ENCODE measurements at regions of chr19 and their contacts with region 1.

Region 1: DNA sequence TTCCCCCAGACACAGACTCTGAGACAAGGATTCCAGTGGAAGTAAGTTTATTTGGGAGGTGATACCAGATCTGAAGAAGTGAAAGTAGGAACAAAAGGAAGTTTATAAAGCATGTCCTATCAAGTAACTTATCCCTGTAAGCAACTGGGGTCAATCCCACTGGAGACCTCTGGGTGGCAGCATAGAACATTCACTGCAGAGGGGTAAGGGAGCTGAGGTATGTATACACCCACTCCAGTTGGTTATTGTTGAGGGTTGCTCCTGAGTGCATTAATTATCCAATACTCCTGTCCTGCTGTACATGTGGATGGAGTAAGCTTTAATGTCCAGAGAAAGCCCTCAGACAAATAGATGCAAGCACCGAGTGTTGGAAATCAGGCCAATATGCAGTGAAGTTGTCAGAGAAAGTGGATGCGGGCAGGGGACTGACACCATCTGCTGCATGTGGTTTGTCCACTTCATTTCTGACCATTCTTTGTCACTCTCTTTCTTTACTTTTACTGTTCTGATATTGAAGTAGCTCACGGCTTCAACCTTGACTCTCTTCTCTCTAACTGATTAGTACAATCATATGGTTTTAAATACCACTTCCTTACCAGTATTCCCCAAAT is 46.7 kb downstream of the NOTCH3 start:
- DNase-seq: peak; percentile 58 to 72 (median 68)
- ATAC-seq: peak; percentile 75
- H3K4me3 ChIP-seq: no peak overlapping the region
- H3K27ac ChIP-seq: no peak overlapping the region
- H3K4me1 ChIP-seq: no peaks in the 10 kb centered on the region
- H3K27me3 ChIP-seq: peaks cover 0 to 4% of the 10 kb centered on the region in 2 experiments; a peak in 1 of 5 replicates
- CTCF ChIP-seq: peak; percentile 68 to 76 (median 69)
- EP300 ChIP-seq: no peak
- POLR2A ChIP-seq: no peak
- RAD21 ChIP-seq: peak; percentile 26 to 69; a peak in 2 of 4 replicates

Region 2: GRCh38 chr19:14890643-14891379 is 263.3 kb before region 1 on chr19:
- CTCF ChIA-PET with region 1: no interaction called
- POLR2A ChIA-PET with region 1: no interaction called
- in situ Hi-C with region 1: no loop called
- intact Hi-C with region 1: loop called (anchors 10 kb)
- DNase-seq: peak; percentile 25 to 74 (median 44)
- ATAC-seq: peak; percentile 78
- H3K4me3 ChIP-seq: no peak overlapping the region
- H3K27ac ChIP-seq: no peak overlapping the region
- H3K4me1 ChIP-seq: peaks cover 0 to 12% of the 10 kb centered on the region in 2 experiments; a peak in 2 of 5 replicates
- H3K27me3 ChIP-seq: peaks cover 4 to 8% of the 10 kb centered on the region in 2 experiments; a peak in 2 of 5 replicates
- CTCF ChIP-seq: no peak
- EP300 ChIP-seq: peak; percentile 90
- POLR2A ChIP-seq: no peak
- RAD21 ChIP-seq: no peak

Region 3: DNA sequence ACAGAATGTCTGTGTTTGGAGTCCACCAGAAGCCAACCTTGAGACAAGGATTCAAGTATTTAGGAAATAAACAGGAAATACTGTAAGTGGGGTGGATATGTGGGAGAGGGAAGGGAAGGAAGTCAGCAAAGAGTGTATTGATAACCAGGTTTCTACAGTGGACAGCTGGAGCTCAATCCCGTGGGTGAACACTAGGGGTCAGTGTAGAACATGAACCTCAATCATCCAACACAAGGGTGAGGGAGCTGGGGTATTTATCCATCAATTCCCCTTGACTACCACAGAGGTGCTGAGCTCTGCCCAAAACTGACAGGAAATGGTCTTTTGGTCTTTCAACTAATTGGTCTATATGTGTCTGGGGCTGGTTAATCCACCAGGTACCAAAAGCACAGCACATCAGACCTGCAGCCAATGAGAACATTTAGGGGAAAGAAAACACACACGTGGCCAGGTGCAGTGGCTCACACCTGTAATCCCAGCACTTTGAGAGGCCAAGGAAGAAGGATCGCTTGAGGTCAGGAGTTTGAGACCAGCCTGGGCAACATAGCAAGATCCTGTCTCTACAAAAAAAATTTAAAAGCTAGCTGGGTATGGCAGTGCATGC is 52.5 kb before region 1 on chr19:
- CTCF ChIA-PET with region 1: interaction called, 7 read pairs
- POLR2A ChIA-PET with region 1: no interaction called
- in situ Hi-C with region 1: no loop called
- intact Hi-C with region 1: loop called (anchors 1 kb)
- DNase-seq: peak; percentile 42 to 61 (median 56)
- ATAC-seq: peak; percentile 70
- H3K4me3 ChIP-seq: no peak overlapping the region
- H3K27ac ChIP-seq: no peak overlapping the region
- H3K4me1 ChIP-seq: no peaks in the 10 kb centered on the region
- H3K27me3 ChIP-seq: peaks cover 0 to 16% of the 10 kb centered on the region in 2 experiments; a peak in 3 of 5 replicates
- CTCF ChIP-seq: peak; percentile 59 to 74 (median 71)
- EP300 ChIP-seq: no peak
- POLR2A ChIP-seq: no peak
- RAD21 ChIP-seq: peak; percentile 20 to 59; a peak in 2 of 4 replicates